H1 (cell line): ENCODE measurements at regions of chr7 and their contacts with region 1.

Region 1: DNA sequence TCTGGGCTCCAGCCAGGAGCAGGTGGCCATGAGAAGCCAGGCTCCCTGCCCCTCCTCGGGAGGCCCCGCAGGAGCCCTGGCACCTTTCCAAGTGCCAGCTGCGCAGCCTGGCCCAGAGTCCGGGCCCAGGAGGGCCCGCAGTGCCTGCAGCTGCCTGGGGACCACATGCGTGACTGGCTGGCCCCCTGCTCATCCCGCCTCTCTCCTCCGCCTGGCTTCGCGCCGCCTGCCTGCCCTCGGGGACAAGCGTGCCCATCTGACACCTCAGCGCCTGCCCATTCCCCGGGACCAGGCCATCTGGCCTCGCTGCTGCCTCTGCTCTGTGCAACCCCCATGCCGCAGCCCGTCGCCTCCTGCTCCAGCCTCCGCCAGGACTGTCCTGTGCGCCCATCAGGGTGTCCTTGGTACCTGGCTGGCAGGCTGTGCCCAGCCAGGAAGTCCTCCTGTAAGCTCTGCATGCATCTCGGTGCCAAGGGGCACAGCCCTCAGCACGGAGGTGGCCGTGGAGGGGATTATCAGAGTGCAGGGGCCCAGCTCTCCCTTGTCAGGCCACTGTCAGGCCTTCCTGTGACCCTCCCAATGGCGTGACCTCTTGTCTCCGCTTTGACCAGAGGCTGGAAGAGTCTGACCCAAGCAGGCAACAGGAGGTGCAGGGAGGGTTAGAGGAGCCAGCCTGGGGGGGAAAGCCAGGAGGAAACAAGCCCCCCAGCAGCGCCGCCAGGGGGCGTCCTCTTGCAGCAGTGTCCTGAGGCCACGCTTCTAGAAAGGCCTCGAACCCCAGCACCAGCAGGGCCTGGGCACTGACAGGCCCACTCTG is 50.5 kb downstream of the TMEM209 start:
- DNase-seq: peak; percentile 41 to 84
- H3K4me3 ChIP-seq: no peak overlapping the region
- H3K27ac ChIP-seq: no peak overlapping the region
- H3K4me1 ChIP-seq: peaks cover 0 to 4% (median under 1%) of the 10 kb centered on the region in 4 experiments; a peak in 2 of 7 replicates
- H3K27me3 ChIP-seq: no peaks in the 10 kb centered on the region; a peak in 1 of 7 replicates
- CTCF ChIP-seq: peak; percentile 69 to 75 (median 74)
- EP300 ChIP-seq: no peak
- POLR2A ChIP-seq: no peak
- RAD21 ChIP-seq: peak; percentile 59 to 72

Region 2: DNA sequence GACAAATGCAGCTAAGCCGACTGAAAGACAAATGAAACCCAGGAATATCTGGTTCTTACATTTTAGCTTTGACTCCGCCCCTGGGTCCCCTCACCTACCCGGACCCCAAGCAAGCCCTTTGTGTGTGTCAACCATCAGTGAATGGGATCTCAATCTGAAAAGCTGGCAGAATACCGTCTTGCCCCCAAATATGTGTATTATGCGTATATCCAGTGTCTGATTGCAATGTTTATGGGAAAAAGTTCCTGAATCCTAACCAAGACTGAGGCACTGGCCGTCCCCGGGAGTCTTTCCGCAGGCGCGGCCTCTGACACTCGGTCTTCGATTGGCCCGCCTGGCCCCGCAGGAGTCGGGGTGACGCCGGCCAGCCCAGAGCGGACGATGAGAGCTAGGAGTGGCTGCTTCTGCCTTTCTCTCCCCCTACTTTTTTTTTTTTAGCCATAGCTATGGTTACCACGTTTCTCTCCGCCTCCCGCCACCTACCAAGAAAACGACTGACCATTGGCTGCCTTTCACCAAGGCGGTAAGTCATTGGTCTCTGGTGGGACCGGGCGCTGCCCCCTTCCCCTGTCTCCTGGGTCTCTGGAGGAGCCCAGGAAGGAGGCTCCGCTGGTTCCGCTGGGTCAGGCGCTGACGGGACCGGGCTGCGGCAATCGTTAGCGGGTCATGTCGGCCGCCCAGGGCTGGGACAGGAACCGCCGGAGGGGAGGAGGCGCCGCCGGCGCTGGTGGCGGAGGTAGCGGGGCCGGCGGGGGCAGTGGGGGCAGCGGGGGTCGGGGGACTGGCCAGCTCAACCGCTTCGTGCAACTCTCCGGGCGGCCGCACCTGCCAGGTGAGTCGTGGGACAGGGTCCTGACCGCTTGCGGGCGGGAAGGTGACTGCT is 84.5 kb before region 1 on chr7 and contains the start of gene KLHDC10:
- CTCF ChIA-PET with region 1: interaction called, 13 read pairs
- POLR2A ChIA-PET with region 1: no interaction called
- DNase-seq: peak; percentile 94 to 95
- H3K4me3 ChIP-seq: peak within 1 kb of the TSS; percentile 71 to 95 (median 84)
- H3K27ac ChIP-seq: peak within 1 kb of the TSS; percentile 44; the same call in 1 of the 2 replicates
- H3K4me1 ChIP-seq: peaks cover 0 to 2% (median 0%) of the 10 kb centered on the region in 4 experiments; a peak in 1 of 7 replicates
- H3K27me3 ChIP-seq: no peaks in the 10 kb centered on the region
- CTCF ChIP-seq: no peak
- EP300 ChIP-seq: peak in 1 of 2 experiments; percentile 83; a peak in 1 of 3 replicates
- POLR2A ChIP-seq: peak in 1 of 2 experiments; percentile 79; a peak in 2 of 3 replicates
- RAD21 ChIP-seq: no peak
- total RNA-seq, gene KLHDC10: 14.5 and 21.1 TPM in 2 replicates

Region 3: GRCh38 chr7:130114374-130115135 is 40.2 kb before region 1 on chr7:
- CTCF ChIA-PET with region 1: interaction called, 22 read pairs
- POLR2A ChIA-PET with region 1: no interaction called
- DNase-seq: no peak
- H3K4me3 ChIP-seq: no peak overlapping the region
- H3K27ac ChIP-seq: no peak overlapping the region
- H3K4me1 ChIP-seq: no peaks in the 10 kb centered on the region
- H3K27me3 ChIP-seq: no peaks in the 10 kb centered on the region
- CTCF ChIP-seq: no peak
- EP300 ChIP-seq: no peak
- POLR2A ChIP-seq: no peak
- RAD21 ChIP-seq: no peak

Region 4: GRCh38 chr7:130135208-130136205 is 19.2 kb before region 1 on chr7:
- CTCF ChIA-PET with region 1: interaction called, 11 read pairs
- POLR2A ChIA-PET with region 1: interaction called, 17 read pairs
- DNase-seq: no peak
- H3K4me3 ChIP-seq: no peak overlapping the region
- H3K27ac ChIP-seq: no peak overlapping the region
- H3K4me1 ChIP-seq: peaks cover 0 to 5% (median under 1%) of the 10 kb centered on the region in 4 experiments; a peak in 2 of 7 replicates
- H3K27me3 ChIP-seq: peaks cover 0 to 8% (median 5%) of the 10 kb centered on the region in 4 experiments; a peak in 5 of 7 replicates
- CTCF ChIP-seq: no peak
- EP300 ChIP-seq: no peak
- POLR2A ChIP-seq: no peak
- RAD21 ChIP-seq: no peak

Region 5: GRCh38 chr7:130141161-130141883 is 13.4 kb before region 1 on chr7:
- CTCF ChIA-PET with region 1: interaction called, 12 read pairs
- POLR2A ChIA-PET with region 1: interaction called, 17 read pairs
- DNase-seq: peak; percentile 62 to 85
- H3K4me3 ChIP-seq: peak overlapping the region; percentile 48 to 65 (median 55)
- H3K27ac ChIP-seq: peak overlapping the region; percentile 87
- H3K4me1 ChIP-seq: peaks cover 0 to 15% (median 13%) of the 10 kb centered on the region in 4 experiments; a peak in 6 of 7 replicates
- H3K27me3 ChIP-seq: peaks cover 0 to 13% (median 8%) of the 10 kb centered on the region in 4 experiments; a peak in 5 of 7 replicates
- CTCF ChIP-seq: no peak
- EP300 ChIP-seq: peak in 1 of 2 experiments; percentile 88; a peak in 2 of 3 replicates
- POLR2A ChIP-seq: peak in 1 of 2 experiments; percentile 91; a peak in 2 of 3 replicates
- RAD21 ChIP-seq: peak in 1 of 2 experiments; percentile 8; a peak in 1 of 4 replicates

Region 6: DNA sequence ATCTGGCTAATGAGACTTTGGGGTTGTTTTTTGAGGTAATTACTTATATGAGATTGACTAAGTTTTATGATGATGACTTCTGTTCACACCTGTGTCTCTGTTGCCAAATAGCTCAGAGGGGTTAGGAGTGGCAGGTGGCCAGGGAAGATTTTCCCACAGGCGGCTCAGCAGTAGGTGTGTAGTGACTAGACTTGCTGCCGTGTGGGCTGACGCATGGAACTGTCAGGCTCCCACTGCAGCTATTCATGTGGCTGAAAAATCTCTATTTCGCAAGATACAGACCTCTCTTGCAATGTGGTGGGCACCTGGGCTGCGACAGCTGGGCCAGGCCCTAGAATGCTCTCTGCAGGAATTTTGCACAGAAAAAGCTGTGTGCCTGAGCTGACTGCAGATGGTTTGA is 139.6 kb after region 1 on chr7:
- CTCF ChIA-PET with region 1: no interaction called
- POLR2A ChIA-PET with region 1: no interaction called
- DNase-seq: no peak
- H3K4me3 ChIP-seq: no peak overlapping the region
- H3K27ac ChIP-seq: no peak overlapping the region
- H3K4me1 ChIP-seq: no peaks in the 10 kb centered on the region
- H3K27me3 ChIP-seq: no peaks in the 10 kb centered on the region
- CTCF ChIP-seq: no peak
- EP300 ChIP-seq: no peak
- POLR2A ChIP-seq: no peak
- RAD21 ChIP-seq: no peak